HEK293 (cell line): ENCODE measurements at regions of chr15 and their contacts with region 1.

Region 1: DNA sequence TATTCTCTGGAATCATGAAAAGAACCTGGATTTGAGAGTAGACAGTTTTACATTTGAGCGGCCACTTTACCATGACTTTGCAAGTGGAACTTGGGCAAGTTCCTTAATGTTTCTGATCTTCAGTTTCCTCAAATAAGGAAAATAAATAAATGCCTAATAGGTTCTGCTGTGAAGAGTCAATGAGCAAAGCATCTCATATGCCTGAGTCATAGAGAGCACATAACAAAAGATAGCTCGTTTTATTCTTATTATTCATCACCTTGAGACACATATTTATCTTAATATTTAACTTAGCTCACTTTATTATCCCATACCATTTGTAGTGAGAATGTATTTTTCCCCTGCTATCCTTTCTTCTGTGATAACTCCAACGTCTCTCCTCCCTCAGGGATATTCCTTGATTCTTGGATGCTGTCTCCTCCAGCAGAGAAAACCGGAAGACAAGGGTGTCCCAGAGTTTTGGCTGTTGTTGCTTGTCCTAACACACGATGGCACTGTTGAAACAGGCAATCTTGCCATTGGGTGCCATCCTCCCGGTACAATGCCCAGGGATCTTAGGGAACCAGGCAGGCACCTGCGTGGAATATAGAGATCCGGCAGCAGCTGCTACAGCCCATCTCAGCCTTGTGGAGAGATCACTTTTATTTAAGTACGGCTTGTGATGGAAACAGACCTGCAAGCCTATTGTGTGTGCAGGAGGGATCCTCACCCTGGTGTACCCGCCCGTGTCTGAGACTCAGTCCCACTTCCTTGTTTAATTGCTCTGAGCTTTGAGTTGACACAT is 33.3 kb upstream of the VPS33B start:
- H3K4me3 ChIP-seq: no peak overlapping the region
- H3K27ac ChIP-seq: no peak overlapping the region
- H3K4me1 ChIP-seq: no peaks in the 10 kb centered on the region
- CTCF ChIP-seq: peak; percentile 80

Region 2: DNA sequence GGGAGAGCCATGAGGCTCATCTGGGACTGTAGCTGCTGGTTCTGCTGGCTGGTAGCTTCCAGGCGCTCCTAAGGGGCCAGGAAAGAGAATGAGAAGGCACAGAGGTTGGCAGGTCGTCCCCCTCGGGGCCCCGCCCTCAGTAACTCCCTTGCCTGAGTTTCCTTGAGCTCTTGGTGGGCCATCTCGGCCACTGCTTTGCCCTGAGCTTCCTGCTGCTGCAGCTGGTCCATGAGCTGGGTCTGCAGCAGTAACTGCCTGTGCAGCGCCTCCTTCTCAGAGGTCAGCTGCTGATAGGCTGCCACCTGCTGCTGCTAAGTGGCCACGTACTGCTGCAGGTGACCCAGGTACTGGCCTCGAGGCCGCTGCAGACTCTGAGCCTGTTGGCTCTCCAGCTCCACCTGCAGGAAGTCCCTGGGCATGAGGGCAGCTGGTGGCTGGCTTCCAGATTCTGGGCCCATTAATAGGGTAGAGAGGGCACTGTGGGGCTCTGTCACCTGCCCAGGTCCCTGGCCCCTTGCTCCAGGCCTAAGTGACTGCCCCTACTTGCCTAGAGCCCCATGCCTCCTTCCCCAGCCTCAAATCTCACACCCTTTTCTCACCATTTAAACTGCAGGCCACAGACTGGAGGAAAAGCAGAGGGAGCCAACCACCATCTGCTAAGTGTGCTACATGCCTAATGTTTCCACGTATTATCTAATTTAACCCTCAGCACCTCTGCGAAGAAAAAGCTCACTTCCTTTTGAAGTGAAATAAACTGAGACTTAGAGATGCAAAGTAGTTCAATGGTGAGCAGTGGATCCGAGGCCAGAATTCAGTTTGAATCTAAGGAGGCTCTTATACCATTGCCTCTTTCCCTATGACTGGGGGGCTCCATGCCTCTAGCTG is 22.6 kb before region 1 on chr15:
- CTCF ChIA-PET with region 1: interaction called, 14 read pairs
- POLR2A ChIA-PET with region 1: no interaction called
- H3K4me3 ChIP-seq: no peak overlapping the region
- H3K27ac ChIP-seq: no peak overlapping the region
- H3K4me1 ChIP-seq: no peaks in the 10 kb centered on the region
- CTCF ChIP-seq: peak; percentile 96

Region 3: DNA sequence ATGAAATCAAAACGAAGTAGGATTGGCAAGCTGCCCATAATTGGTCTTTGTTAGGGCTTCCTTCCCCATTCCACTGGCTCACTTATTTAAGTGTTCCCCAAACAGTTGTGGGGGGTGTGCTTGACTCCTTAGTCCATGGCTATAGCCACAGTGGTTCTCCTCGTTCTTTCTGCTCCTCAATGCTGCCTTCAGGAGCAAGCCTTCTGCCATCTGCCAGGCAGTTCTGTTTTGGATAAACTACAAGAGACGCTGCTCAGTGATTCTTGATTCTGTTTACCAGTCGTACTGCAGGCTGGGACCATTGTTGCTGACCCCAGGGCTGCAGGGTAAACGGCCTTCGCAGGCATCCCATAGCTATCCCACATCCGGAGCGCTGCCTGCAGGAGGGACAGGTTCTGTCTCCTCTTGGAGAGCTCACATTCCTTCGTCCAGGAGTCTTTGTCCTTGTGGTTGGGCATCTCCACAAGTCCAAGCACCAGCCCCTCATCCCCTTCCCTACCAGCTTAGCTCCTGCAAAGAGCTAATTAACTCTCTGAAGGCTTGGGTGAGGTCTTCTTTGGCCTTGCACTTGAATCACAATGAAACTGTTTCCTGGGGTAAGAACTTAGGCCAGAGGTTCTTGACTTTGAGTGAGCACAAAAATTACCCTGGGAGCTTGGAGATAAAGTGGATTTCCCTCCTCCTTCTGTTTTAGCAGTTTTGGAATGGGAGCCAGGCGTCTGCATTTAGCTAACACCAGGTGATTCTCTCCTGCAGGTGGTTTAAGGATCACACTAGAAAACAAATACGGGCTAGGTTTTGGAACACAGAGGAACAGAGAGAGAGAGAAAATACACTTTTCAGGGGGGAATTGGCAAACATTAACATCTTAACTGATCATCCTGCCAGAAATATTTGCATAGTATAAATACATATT is 159.2 kb after region 1 on chr15:
- CTCF ChIA-PET with region 1: interaction called, 22 read pairs
- POLR2A ChIA-PET with region 1: no interaction called
- H3K4me3 ChIP-seq: no peak overlapping the region
- H3K27ac ChIP-seq: no peak overlapping the region
- H3K4me1 ChIP-seq: no peaks in the 10 kb centered on the region; the same call in 1 of the 2 replicates
- CTCF ChIP-seq: no peak

Region 4: DNA sequence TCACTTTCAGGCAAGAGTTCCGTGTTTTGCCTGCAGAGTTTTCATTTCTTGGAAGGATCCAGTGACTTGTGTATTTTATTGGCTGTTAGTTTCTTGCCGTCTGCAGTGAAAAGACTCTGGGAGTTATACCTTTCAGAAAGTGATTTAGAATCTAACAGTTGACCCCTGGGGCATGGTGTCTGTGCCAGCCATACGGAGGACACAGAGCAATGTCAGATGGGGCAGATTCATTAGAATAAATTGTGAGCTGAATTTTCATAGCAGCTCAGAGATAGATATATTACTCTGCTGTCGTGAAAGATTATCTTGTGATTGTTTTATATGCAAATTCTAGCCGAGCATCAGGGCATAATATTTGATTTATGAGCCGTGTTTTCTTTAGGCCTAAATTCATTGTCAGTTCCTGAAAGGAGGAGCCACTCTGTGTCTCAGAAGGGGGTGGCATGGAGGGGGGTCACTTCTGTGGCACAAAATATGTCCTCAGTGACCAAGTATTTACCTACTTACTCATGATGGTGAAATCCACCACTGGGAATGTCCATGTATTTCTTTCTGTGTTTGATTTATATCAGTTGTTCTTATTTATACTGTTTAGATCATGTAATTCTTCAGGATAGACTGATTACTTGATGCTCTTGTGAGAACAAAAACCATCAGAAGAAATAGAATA is 176.1 kb after region 1 on chr15:
- CTCF ChIA-PET with region 1: interaction called, 104 read pairs
- POLR2A ChIA-PET with region 1: no interaction called
- H3K4me3 ChIP-seq: no peak overlapping the region
- H3K27ac ChIP-seq: no peak overlapping the region
- H3K4me1 ChIP-seq: no peaks in the 10 kb centered on the region
- CTCF ChIP-seq: no peak

Region 5: DNA sequence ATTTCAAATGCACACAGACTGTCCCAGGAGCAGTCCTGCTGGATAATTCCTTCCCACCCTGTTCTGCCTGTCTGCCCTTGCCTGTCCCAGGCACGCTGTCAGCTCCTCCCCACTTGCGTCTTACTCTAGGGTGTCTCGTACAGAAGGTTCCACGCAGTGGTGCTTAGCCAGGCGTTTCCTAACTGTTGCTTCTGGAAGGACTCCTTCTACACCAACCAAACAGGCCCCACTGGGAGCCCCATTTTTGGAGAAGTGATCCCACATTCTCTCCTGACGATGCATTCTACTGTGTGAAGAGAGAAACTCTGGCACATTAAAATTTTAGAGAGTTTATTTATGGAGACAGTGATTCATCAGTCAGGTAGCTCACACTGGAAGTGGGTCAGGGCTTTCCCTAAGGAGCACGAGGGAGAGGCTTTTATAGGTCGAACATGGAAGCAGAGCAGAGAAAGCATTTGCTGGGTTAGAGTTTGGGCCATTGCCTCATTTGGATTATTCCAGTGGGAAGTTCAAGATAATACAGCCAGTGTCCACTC is 208.3 kb after region 1 on chr15:
- CTCF ChIA-PET with region 1: interaction called, 39 read pairs
- POLR2A ChIA-PET with region 1: no interaction called
- H3K4me3 ChIP-seq: no peak overlapping the region
- H3K27ac ChIP-seq: no peak overlapping the region
- H3K4me1 ChIP-seq: no peaks in the 10 kb centered on the region
- CTCF ChIP-seq: no peak

Region 6: GRCh38 chr15:91515188-91515754 is 459.5 kb after region 1 on chr15:
- CTCF ChIA-PET with region 1: no interaction called
- POLR2A ChIA-PET with region 1: no interaction called
- H3K4me3 ChIP-seq: no peak overlapping the region
- H3K27ac ChIP-seq: no peak overlapping the region
- H3K4me1 ChIP-seq: no peaks in the 10 kb centered on the region
- CTCF ChIP-seq: no peak